GM10248 (cell line): ENCODE measurements at regions of chr14 and their contacts with region 1.

Region 1: DNA sequence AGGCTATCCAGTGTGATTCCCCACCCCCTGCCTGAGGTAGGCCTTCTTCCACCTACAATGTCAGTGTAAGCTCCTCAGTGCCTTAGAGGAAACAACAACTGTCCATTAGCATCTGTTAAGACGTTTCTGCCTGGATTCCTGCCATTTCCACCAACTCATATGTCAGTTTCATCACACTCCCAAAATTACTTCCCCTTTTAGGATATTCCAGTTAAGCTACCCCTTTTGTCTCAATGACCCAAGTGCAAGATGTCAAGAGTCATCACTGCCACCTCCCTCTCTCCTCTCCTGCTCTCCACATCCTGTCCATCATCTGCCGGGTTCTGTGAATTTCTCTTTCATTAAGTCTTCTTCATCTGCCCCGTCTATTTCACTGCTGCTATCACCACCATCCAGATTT is 189.4 kb downstream of the DPF3 start:
- DNase-seq: no peak
- CTCF ChIP-seq: no peak

Region 2: DNA sequence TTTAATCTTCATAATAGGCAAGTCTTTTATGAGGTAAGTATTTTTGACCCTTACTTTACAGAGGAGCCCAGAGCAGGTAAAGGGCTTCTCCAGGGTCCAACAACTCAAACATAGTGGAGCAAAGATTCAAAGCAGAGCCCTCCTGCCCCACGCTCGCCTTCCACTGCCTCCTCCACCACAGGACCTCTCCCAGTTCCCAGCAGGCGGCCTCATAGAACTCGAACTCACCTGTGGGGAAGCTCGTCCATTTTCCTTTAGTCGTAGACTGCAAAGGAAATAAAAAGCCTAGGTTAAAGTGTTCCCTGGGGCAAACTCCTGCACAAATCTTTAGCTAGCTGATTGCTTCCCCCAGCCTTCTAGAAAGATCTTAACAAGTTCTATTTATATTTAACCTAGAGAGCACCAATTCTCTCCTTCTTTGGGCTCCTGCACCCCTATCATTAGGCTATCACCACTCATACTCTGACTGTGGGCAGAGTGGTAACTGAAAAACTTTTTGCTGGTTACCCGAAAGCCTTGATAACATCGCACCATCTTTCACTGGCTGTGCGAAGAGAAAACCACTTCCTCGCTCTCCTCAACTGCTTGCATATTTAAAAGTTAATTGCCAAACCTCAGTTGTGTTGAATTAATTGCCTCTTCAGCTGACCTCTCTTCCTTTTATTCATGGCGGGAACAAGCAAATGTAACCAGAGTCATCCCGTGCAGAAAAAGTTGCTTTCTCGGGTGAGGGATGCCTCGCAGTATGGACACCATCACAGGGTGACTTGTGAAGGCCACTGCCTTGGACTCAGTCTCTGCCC is 110.2 kb before region 1 on chr14:
- CTCF ChIA-PET with region 1: no interaction called
- POLR2A ChIA-PET with region 1: no interaction called
- DNase-seq: no peak
- CTCF ChIP-seq: no peak

Region 3: GRCh38 chr14:72721083-72721482 is 16.6 kb after region 1 on chr14:
- CTCF ChIA-PET with region 1: interaction called, 12 read pairs
- POLR2A ChIA-PET with region 1: no interaction called
- DNase-seq: no peak
- CTCF ChIP-seq: no peak